ENCODE measurements at regions of chr3 and their contacts with region 1.

Region 1: GRCh38 chr3:9792405-9793160 is at the starts of genes ARPC4 and TADA3:
- DNase-seq: peak; percentile 99
- ATAC-seq: peak; percentile 77
- H3K4me3 ChIP-seq: peak within 1 kb of the TSS; percentile 78 to 99 (median 94)
- H3K4me3 Mint-ChIP-seq: peak within 1 kb of the TSS; percentile 99
- H3K27ac ChIP-seq: peak within 1 kb of the TSS; percentile 93 to 99
- H3K27ac Mint-ChIP-seq: peak within 1 kb of the TSS; percentile 100
- H3K4me1 ChIP-seq: peaks cover 51 to 63% of the 10 kb centered on the region in 2 donors
- H3K4me1 Mint-ChIP-seq: peaks cover 57% of the 10 kb centered on the region
- H3K27me3 ChIP-seq: no peaks in the 10 kb centered on the region
- H3K27me3 Mint-ChIP-seq: no peaks in the 10 kb centered on the region
- CTCF ChIP-seq: no peak
- total RNA-seq, gene ARPC4: 174 and 179 TPM in 2 replicates
- total RNA-seq, gene TADA3: 43.4 and 45.6 TPM in 2 replicates

Region 2: DNA sequence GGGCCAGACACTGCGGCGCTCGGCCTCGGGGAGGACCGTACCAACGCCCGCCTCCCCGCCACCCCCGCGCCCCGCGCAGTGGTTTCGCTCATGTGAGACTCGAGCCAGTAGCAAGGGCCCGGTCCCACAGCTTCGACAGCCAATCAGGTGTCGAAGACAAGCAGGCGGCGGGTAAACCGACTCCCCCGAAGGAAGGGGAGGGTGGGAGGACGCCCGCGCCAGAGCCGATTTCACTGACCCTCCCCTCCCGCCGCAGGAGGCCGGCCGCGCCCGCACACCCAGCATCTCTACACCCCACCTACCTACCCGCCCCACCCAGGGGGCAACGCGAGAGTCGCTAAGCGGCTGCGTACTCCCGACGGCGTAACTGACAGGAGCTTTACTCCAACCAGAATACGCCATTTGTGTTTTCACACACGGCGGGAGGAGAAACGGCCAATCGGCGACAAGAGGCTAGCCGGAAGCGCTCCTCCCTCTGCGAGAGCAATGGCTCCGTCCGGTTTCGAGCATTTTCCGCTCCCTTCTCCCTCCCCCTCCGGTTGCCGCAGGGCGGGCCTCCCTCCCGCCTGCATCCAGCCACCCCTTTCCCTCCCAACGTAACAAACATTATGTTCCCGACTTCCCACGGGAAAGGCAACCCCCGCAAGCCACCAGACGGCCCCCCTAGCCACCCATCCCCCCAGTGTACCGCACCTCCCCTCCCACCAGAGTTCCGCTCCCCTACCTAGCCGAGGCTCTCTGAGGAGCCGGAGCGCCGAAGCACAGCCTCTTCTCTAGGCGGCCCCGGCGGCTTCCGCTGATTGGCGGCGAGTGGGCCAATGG is 395.7 kb before region 1 on chr3:
- CTCF ChIA-PET with region 1: no interaction called
- POLR2A ChIA-PET with region 1: interaction called, 5 read pairs
- intact Hi-C with region 1: loop called (anchors 2 kb)
- DNase-seq: peak; percentile 99
- ATAC-seq: peak; percentile 70
- H3K4me3 ChIP-seq: peak overlapping the region; percentile 58 to 85 (median 67)
- H3K4me3 Mint-ChIP-seq: peak overlapping the region; percentile 89
- H3K27ac ChIP-seq: peak overlapping the region; percentile 94 to 96
- H3K27ac Mint-ChIP-seq: peak overlapping the region; percentile 100
- H3K4me1 ChIP-seq: peaks cover 40 to 56% of the 10 kb centered on the region in 2 donors
- H3K4me1 Mint-ChIP-seq: peaks cover 60% of the 10 kb centered on the region
- H3K27me3 ChIP-seq: no peaks in the 10 kb centered on the region
- H3K27me3 Mint-ChIP-seq: no peaks in the 10 kb centered on the region
- CTCF ChIP-seq: no peak

Region 3: DNA sequence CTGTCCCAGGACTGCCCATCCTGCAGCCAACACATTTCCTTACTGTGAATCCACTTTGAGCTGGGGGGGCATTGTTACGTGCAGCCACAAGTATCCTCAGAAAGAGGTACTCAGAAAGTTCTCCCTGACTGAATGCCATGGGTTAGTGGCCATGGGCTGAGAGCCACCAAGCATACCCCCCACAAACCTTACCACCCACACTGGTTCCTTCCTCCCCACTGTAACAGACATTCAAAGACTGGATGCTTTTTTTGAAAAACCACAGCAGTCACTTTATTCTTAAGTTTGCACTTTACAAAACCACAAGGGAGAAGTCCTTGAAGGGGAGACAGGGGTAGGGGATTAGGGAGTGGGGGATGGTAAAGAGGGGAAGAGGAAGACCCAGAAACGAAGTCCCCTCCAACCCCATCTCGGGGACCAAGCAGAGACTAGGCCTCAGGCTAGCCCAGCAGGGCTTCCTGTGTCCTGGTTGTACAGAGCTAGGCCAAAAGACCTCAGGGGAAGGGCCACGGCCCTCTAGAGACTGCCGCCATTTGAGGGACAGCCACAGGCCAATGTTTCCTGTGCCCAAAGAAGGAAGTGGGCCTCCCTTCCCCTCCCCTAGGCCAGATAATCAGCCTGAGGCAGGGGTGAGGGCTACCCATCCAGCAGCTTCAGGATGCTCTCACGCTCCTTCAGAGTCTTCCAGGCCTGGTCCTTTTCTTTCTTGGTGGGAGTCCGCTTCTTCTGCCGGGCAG is 12.7 kb before region 1 on chr3:
- CTCF ChIA-PET with region 1: interaction called, 17 read pairs
- POLR2A ChIA-PET with region 1: interaction called, 12 read pairs
- intact Hi-C with region 1: loop called (anchors 1 kb)
- DNase-seq: peak; percentile 73
- ATAC-seq: peak; percentile 74
- H3K4me3 ChIP-seq: peak overlapping the region in 3 of 5 experiments; percentile 1 to 18 (median 3)
- H3K4me3 Mint-ChIP-seq: peak overlapping the region; percentile 40
- H3K27ac ChIP-seq: peak overlapping the region; percentile 56 to 82
- H3K27ac Mint-ChIP-seq: peak overlapping the region; percentile 78
- H3K4me1 ChIP-seq: peaks cover 51 to 59% of the 10 kb centered on the region in 2 donors
- H3K4me1 Mint-ChIP-seq: peaks cover 59% of the 10 kb centered on the region
- H3K27me3 ChIP-seq: no peaks in the 10 kb centered on the region
- H3K27me3 Mint-ChIP-seq: no peaks in the 10 kb centered on the region
- CTCF ChIP-seq: no peak

Region 4: GRCh38 chr3:9843715-9844438 is 51.3 kb after region 1 on chr3 and contains the start of gene RPUSD3:
- CTCF ChIA-PET with region 1: interaction called, 4 read pairs
- POLR2A ChIA-PET with region 1: interaction called, 4 read pairs
- intact Hi-C with region 1: loop called (anchors 1 kb)
- DNase-seq: peak; percentile 97
- ATAC-seq: peak; percentile 100
- H3K4me3 ChIP-seq: peak within 1 kb of the TSS; percentile 60 to 96 (median 73)
- H3K4me3 Mint-ChIP-seq: peak within 1 kb of the TSS; percentile 98
- H3K27ac ChIP-seq: peak within 1 kb of the TSS; percentile 17 to 75
- H3K27ac Mint-ChIP-seq: peak within 1 kb of the TSS; percentile 92
- H3K4me1 ChIP-seq: peaks cover 8 to 17% of the 10 kb centered on the region in 2 donors
- H3K4me1 Mint-ChIP-seq: peaks cover 20% of the 10 kb centered on the region
- H3K27me3 ChIP-seq: no peaks in the 10 kb centered on the region
- H3K27me3 Mint-ChIP-seq: no peaks in the 10 kb centered on the region
- CTCF ChIP-seq: no peak
- total RNA-seq, gene RPUSD3: 60.7 and 62.1 TPM in 2 replicates

Region 5: DNA sequence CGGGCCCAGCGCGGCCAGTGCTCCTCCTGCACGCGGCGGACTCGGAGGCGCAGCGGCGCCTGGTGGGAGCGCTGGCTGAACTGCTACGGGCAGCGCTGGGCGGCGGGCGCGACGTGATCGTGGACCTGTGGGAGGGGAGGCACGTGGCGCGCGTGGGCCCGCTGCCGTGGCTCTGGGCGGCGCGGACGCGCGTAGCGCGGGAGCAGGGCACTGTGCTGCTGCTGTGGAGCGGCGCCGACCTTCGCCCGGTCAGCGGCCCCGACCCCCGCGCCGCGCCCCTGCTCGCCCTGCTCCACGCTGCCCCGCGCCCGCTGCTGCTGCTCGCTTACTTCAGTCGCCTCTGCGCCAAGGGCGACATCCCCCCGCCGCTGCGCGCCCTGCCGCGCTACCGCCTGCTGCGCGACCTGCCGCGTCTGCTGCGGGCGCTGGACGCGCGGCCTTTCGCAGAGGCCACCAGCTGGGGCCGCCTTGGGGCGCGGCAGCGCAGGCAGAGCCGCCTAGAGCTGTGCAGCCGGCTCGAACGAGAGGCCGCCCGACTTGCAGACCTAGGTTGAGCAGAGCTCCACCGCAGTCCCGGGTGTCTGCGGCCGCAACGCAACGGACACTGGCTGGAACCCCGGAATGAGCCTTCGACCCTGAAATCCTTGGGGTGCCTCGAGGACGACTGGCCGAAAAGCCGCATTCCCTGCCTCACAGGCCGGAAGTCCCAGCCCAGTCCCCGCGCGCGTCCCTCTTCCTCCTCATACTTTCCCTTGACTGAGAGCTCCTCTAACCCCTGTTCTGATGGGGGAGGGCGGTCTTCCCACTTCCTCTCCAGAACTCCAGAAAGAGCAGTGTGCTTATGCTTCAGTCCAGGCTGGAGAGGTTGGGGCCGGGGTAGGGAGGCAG is 122.9 kb after region 1 on chr3:
- CTCF ChIA-PET with region 1: no interaction called
- POLR2A ChIA-PET with region 1: no interaction called
- intact Hi-C with region 1: no loop called
- DNase-seq: peak; percentile 51
- ATAC-seq: peak; percentile 62
- H3K4me3 ChIP-seq: peak overlapping the region in 4 of 5 experiments; percentile 32 to 72 (median 50)
- H3K4me3 Mint-ChIP-seq: peak overlapping the region; percentile 83
- H3K27ac ChIP-seq: no peak overlapping the region
- H3K27ac Mint-ChIP-seq: no peak overlapping the region
- H3K4me1 ChIP-seq: peaks cover 17 to 20% of the 10 kb centered on the region in 2 donors
- H3K4me1 Mint-ChIP-seq: peaks cover 15% of the 10 kb centered on the region
- H3K27me3 ChIP-seq: peaks cover 0 to 29% (median 9%) of the 10 kb centered on the region in 4 experiments
- H3K27me3 Mint-ChIP-seq: peaks cover 9% of the 10 kb centered on the region
- CTCF ChIP-seq: no peak

Region 6: DNA sequence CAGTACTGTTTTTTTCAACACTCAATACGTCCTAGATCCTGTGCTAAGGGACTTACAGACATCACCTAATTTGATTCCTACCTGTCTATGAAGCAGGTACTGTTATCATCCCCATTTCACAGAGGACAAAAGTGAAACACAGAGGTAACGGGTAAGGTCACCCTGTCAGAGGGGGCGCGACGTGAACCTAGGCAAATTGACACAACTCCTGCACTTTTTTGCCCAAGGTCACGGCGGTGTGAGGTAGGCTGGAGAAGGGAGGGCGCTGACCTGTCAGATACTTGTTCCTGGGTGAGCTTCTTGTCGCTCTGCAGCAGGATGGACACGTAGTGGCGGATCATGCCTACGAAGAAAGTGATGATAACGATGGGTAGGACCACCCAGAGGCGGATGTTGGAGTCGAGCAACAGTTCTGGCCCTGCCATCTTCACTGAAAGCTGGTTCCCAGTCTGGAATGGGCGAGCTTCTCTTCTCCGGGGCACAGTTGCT is 193.7 kb after region 1 on chr3:
- CTCF ChIA-PET with region 1: interaction called, 3 read pairs
- POLR2A ChIA-PET with region 1: interaction called, 3 read pairs
- intact Hi-C with region 1: loop called (anchors 1 kb)
- DNase-seq: no peak
- ATAC-seq: peak; percentile 28
- H3K4me3 ChIP-seq: peak overlapping the region; percentile 71 to 96 (median 82)
- H3K4me3 Mint-ChIP-seq: peak overlapping the region; percentile 98
- H3K27ac ChIP-seq: peak overlapping the region; percentile 88 to 97
- H3K27ac Mint-ChIP-seq: peak overlapping the region; percentile 100
- H3K4me1 ChIP-seq: peaks cover 16 to 22% of the 10 kb centered on the region in 2 donors
- H3K4me1 Mint-ChIP-seq: peaks cover 28% of the 10 kb centered on the region
- H3K27me3 ChIP-seq: no peaks in the 10 kb centered on the region
- H3K27me3 Mint-ChIP-seq: no peaks in the 10 kb centered on the region
- CTCF ChIP-seq: no peak

Region 7: DNA sequence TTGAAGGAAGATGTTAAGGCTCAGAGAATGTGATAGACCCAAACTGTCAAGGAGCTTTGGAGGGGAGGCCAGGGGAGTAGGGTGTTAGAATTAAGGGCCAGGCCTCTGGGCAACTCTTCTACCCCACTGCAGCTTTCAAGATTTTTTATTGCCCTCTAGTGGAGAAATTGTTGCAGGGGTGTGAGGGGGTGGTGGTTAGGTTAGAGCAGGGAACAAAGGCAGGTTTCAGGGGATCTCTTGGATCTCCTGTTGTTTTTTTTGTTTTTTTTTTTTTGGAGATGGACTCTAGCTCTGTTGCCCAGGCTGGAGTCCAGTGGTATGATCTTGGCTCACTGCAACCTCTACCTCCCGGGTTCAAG is 529.7 kb after region 1 on chr3:
- CTCF ChIA-PET with region 1: no interaction called
- POLR2A ChIA-PET with region 1: interaction called, 5 read pairs
- intact Hi-C with region 1: loop called (anchors 1 kb)
- DNase-seq: peak; percentile 55
- ATAC-seq: no peak
- H3K4me3 ChIP-seq: no peak overlapping the region
- H3K4me3 Mint-ChIP-seq: peak overlapping the region; percentile 26
- H3K27ac ChIP-seq: no peak overlapping the region
- H3K27ac Mint-ChIP-seq: peak overlapping the region; percentile 70
- H3K4me1 ChIP-seq: peaks cover 11 to 21% of the 10 kb centered on the region in 2 donors
- H3K4me1 Mint-ChIP-seq: peaks cover 26% of the 10 kb centered on the region
- H3K27me3 ChIP-seq: peaks cover 0 to 2% (median 0%) of the 10 kb centered on the region in 4 experiments
- H3K27me3 Mint-ChIP-seq: peaks cover 8% of the 10 kb centered on the region
- CTCF ChIP-seq: peak; percentile 56